Activated CD8-positive, alpha-beta T cell treated with anti-CD3 and anti-CD28 coated beads, Interleukin-2, amount 10 ng/mL, durations not matched to agents 7 days and 5 days (primary cell): ENCODE measurements at regions of chr14 and their contacts with region 1.

Region 1: GRCh38 chr14:63650256-63650952 is 8.7 kb upstream of the WDR89 start:
- DNase-seq: peak; percentile 66
- ATAC-seq: peak; percentile 87
- H3K4me3 Mint-ChIP-seq: peak overlapping the region; percentile 32
- H3K27ac Mint-ChIP-seq: peak overlapping the region; percentile 94
- H3K4me1 Mint-ChIP-seq: peaks cover 18% of the 10 kb centered on the region
- H3K27me3 Mint-ChIP-seq: no peaks in the 10 kb centered on the region

Region 2: DNA sequence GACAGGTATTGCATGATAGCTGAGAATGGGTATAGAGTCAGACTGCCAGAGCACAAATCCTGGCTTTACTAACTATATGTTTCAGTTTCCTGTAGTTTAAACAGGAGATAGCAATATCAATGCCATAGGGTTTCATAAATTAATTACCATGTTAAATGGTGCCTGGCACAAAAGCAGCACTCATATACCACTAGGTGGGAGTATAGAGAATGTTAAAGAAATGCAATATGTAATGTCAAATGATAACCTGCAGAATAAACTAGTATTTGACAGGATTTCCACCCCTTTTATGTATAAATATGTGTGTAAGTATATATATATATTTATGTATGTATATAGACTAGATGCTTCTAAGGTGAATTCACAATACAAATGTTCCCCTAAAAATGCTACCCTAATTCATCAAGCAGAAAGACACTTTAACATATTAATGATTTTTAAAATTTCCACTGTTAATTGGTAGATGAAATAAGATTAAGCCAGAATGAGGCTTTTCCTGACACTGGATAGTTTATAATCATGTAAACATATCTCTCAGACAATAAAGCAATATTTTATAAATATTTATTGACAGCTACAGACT is 17.4 kb before region 1 on chr14:
- CTCF ChIA-PET with region 1: interaction called, 11 read pairs
- POLR2A ChIA-PET with region 1: no interaction called
- DNase-seq: no peak
- ATAC-seq: peak; percentile 68
- H3K4me3 Mint-ChIP-seq: no peak overlapping the region
- H3K27ac Mint-ChIP-seq: no peak overlapping the region
- H3K4me1 Mint-ChIP-seq: peaks cover 25% of the 10 kb centered on the region
- H3K27me3 Mint-ChIP-seq: no peaks in the 10 kb centered on the region